Naive thymus-derived CD4-positive, alpha-beta T cell (primary cell): ENCODE measurements at regions of chr2 and their contacts with region 1.

Region 1: GRCh38 chr2:241508240-241509154 is at the start of gene STK25:
- DNase-seq: peak; percentile 93 to 98 (median 97)
- ATAC-seq: peak; percentile 96
- H3K4me3 ChIP-seq: peak within 1 kb of the TSS; percentile 70
- H3K4me3 Mint-ChIP-seq: peak within 1 kb of the TSS; percentile 80 to 92 (median 86)
- H3K27ac ChIP-seq: peak within 1 kb of the TSS; percentile 81
- H3K27ac Mint-ChIP-seq: peak within 1 kb of the TSS; percentile 67 to 91 (median 85)
- H3K4me1 ChIP-seq: peaks cover 7 to 16% of the 10 kb centered on the region in 2 donors
- H3K4me1 Mint-ChIP-seq: peaks cover 17 to 33% (median 24%) of the 10 kb centered on the region in 7 donors
- H3K27me3 ChIP-seq: no peaks in the 10 kb centered on the region
- H3K27me3 Mint-ChIP-seq: peaks cover 0 to 1% (median 0%) of the 10 kb centered on the region in 5 donors
- total RNA-seq, gene STK25: 90.8 to 170 (median 115) TPM

Region 2: DNA sequence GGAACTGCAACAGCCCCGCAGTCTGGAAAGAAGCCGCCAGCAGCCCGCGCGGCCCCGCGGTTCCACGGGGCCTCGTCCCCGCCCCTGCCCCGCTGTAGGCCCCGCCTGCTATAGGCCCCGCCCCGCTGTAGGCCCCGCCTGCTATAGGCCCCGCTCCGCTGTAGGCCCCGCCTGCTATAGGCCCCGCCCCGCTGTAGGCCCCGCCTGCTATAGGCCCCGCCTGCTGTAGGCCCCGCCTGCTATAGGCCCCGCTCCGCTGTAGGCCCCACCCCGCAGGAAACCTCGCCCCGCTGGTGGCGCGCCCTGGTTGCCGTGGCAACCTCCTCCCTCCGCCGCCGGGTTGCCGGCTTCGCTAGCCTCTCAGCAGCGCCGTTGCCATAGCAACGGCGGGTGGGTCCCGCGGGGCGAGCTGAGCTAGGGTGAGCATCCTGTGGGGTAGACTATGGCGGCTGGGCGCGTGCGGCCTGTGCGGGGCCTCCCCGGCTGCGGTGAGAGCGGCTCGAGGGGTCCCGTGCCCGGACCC is 676.2 kb before region 1 on chr2:
- CTCF ChIA-PET with region 1: interaction called, 4 read pairs
- POLR2A ChIA-PET with region 1: no interaction called
- intact Hi-C with region 1: loop called in 1 of 2 experiments (anchors 1 kb)
- DNase-seq: peak; percentile 93 to 100 (median 99)
- ATAC-seq: peak; percentile 96
- H3K4me3 ChIP-seq: peak overlapping the region; percentile 32
- H3K4me3 Mint-ChIP-seq: peak overlapping the region in 8 of 10 donors; percentile 56 to 78 (median 71)
- H3K27ac ChIP-seq: no peak overlapping the region
- H3K27ac Mint-ChIP-seq: peak overlapping the region in 4 of 9 donors; percentile 22 to 88 (median 74)
- H3K4me1 ChIP-seq: peaks cover 11 to 14% of the 10 kb centered on the region in 2 donors
- H3K4me1 Mint-ChIP-seq: peaks cover 0 to 7% (median 0%) of the 10 kb centered on the region in 7 donors
- H3K27me3 ChIP-seq: no peaks in the 10 kb centered on the region
- H3K27me3 Mint-ChIP-seq: peaks cover 4 to 30% (median 19%) of the 10 kb centered on the region in 5 donors

Region 3: DNA sequence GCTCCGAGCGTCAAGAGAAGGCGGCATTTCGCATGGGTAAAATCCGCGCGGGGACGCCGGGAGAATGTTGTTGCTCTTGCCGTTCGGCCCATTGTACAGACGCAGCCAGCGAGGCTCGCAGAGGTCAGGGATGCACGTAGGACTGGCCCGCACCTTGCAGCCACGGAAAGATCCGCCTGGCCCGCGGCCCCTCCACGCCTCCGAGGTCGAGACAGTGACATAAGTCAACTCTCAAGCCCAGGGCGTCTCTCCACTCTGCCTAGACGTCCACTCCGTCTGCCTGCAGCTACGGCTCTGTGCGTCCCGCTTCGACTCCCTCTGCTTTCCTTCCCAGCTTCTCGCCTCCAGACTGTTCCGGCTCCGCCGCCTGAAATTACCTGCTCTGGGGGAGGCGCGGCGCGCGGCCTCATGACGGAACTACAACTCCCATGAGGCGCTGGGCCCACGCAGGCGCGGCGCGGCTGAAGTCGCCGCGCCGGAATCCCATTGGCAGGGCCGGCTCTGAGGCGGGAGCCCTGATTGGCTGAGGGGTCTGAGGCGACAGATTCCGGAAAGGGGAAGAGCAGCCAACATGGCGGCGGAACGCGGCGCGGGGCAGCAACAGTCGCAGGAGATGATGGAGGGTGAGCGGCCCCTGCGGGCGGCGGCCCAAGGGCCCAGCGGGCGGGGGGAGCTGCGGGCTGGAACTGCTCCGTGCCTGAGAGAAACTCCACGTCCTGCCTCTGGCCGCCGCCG is 358.4 kb before region 1 on chr2 and contains the start of gene PPP1R7:
- CTCF ChIA-PET with region 1: no interaction called
- POLR2A ChIA-PET with region 1: no interaction called
- intact Hi-C with region 1: loop called in 1 of 2 experiments (anchors 5 kb)
- DNase-seq: peak; percentile 83 to 96 (median 93)
- ATAC-seq: peak; percentile 87
- H3K4me3 ChIP-seq: peak within 1 kb of the TSS; percentile 97
- H3K4me3 Mint-ChIP-seq: peak within 1 kb of the TSS; percentile 95 to 100 (median 98)
- H3K27ac ChIP-seq: peak within 1 kb of the TSS; percentile 71
- H3K27ac Mint-ChIP-seq: peak within 1 kb of the TSS; percentile 85 to 97 (median 94)
- H3K4me1 ChIP-seq: peaks cover 13 to 26% of the 10 kb centered on the region in 2 donors
- H3K4me1 Mint-ChIP-seq: peaks cover 33 to 58% (median 51%) of the 10 kb centered on the region in 7 donors
- H3K27me3 ChIP-seq: no peaks in the 10 kb centered on the region
- H3K27me3 Mint-ChIP-seq: no peaks in the 10 kb centered on the region
- total RNA-seq, gene PPP1R7: 39.2 to 105 (median 55.3) TPM

Region 4: GRCh38 chr2:241443486-241444223 is 64.8 kb before region 1 on chr2:
- CTCF ChIA-PET with region 1: no interaction called
- POLR2A ChIA-PET with region 1: interaction called, 4 read pairs
- intact Hi-C with region 1: loop called (anchors 1 to 2 kb)
- DNase-seq: peak; percentile 76 to 98 (median 94)
- ATAC-seq: peak; percentile 85
- H3K4me3 ChIP-seq: no peak overlapping the region
- H3K4me3 Mint-ChIP-seq: peak overlapping the region in 8 of 10 donors; percentile 20 to 80 (median 44)
- H3K27ac ChIP-seq: no peak overlapping the region
- H3K27ac Mint-ChIP-seq: peak overlapping the region; percentile 2 to 96 (median 68)
- H3K4me1 ChIP-seq: peaks cover 16 to 17% of the 10 kb centered on the region in 2 donors
- H3K4me1 Mint-ChIP-seq: peaks cover 13 to 25% (median 21%) of the 10 kb centered on the region in 7 donors
- H3K27me3 ChIP-seq: peaks cover 9 to 35% of the 10 kb centered on the region in 2 donors
- H3K27me3 Mint-ChIP-seq: peaks cover 35 to 80% (median 59%) of the 10 kb centered on the region in 5 donors

Region 5: GRCh38 chr2:241617431-241618154 is 109.1 kb after region 1 on chr2:
- CTCF ChIA-PET with region 1: no interaction called
- POLR2A ChIA-PET with region 1: no interaction called
- intact Hi-C with region 1: loop called in 1 of 2 experiments (anchors 1 kb)
- DNase-seq: peak in 8 of 9 donors; percentile 41 to 71 (median 60)
- ATAC-seq: peak; percentile 77
- H3K4me3 ChIP-seq: peak overlapping the region; percentile 68
- H3K4me3 Mint-ChIP-seq: peak overlapping the region; percentile 79 to 96 (median 91)
- H3K27ac ChIP-seq: peak overlapping the region; percentile 75
- H3K27ac Mint-ChIP-seq: peak overlapping the region; percentile 85 to 98 (median 94)
- H3K4me1 ChIP-seq: peaks cover 13 to 18% of the 10 kb centered on the region in 2 donors
- H3K4me1 Mint-ChIP-seq: peaks cover 23 to 49% (median 43%) of the 10 kb centered on the region in 7 donors
- H3K27me3 ChIP-seq: no peaks in the 10 kb centered on the region
- H3K27me3 Mint-ChIP-seq: no peaks in the 10 kb centered on the region

Region 6: DNA sequence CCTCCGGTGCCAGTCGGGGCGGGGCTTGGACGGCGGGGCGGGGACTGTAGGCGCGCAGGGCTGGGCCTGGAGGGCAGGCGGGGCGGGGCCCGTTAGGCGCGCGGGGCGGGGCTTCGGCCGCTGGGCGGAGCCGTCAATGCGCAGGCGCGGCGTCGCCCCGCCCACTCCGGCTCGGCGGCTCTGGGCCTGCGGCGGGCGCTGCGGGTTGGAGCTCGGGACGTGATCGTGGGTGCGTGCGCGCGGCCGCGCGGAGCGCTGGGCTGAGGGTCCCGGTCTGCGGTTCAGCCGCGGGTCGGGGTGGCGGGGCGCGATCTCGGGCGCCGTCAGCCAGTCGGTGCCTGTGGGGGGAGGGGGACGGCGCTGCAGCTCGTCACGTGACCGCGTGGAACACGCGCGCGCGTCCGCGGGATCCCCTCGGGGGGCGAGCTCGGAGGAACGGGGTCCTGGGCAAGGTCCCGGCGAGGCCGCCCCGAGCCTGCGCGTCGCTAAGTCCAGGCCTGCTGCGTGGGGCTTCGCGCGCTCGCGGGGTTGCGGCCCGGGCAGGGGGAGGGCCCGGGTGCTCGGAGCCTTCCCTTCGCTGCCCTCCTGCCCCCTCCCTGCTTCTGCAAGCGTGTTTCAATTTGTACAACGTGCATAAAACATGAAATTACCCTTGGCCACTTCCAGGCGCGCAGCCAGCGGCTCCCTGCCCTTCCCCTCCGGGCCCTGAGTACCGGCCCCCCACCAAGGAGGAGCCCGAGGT is 226.1 kb after region 1 on chr2 and contains the start of gene D2HGDH:
- CTCF ChIA-PET with region 1: no interaction called
- POLR2A ChIA-PET with region 1: no interaction called
- intact Hi-C with region 1: loop called (anchors 1 kb)
- DNase-seq: peak; percentile 85 to 99 (median 91)
- ATAC-seq: peak; percentile 98
- H3K4me3 ChIP-seq: peak within 1 kb of the TSS; percentile 88
- H3K4me3 Mint-ChIP-seq: peak within 1 kb of the TSS; percentile 79 to 89 (median 84)
- H3K27ac ChIP-seq: peak within 1 kb of the TSS; percentile 75
- H3K27ac Mint-ChIP-seq: peak within 1 kb of the TSS in 8 of 9 donors; percentile 40 to 79 (median 72)
- H3K4me1 ChIP-seq: peaks cover 9% of the 10 kb centered on the region in 2 donors
- H3K4me1 Mint-ChIP-seq: peaks cover 9 to 54% (median 43%) of the 10 kb centered on the region in 7 donors
- H3K27me3 ChIP-seq: no peaks in the 10 kb centered on the region
- H3K27me3 Mint-ChIP-seq: no peaks in the 10 kb centered on the region
- total RNA-seq, gene D2HGDH: 32.5 to 49.8 (median 41.1) TPM